ENCODE measurements at regions of chr16 and their contacts with region 1.

Region 1: DNA sequence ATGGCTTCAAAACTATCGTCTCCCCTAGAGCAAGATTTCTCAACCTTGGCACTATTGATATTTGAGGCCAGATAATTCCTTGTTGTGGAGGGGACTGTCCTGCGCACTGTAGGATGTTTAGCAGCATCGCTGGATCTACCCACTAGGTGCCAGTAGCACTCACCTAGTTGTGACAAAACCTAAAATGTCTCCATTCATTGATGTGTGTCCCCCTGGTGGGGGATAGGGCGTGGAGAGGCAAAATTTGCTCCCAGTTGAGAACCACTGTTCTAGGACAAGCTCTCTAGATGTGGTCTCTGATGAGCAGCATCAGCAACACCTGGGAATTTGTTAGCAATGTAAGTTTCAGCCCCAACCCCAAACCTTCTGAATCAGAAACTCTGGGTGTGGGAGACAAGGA is 259.0 kb downstream of the XYLT1 start:
- DNase-seq: peak; percentile 68 to 77 (median 75)
- H3K4me3 ChIP-seq: no peak overlapping the region
- H3K27ac ChIP-seq: no peak overlapping the region
- H3K4me1 ChIP-seq: peaks cover 0 to 6% (median 1%) of the 10 kb centered on the region in 4 experiments
- H3K27me3 ChIP-seq: no peaks in the 10 kb centered on the region

Region 2: DNA sequence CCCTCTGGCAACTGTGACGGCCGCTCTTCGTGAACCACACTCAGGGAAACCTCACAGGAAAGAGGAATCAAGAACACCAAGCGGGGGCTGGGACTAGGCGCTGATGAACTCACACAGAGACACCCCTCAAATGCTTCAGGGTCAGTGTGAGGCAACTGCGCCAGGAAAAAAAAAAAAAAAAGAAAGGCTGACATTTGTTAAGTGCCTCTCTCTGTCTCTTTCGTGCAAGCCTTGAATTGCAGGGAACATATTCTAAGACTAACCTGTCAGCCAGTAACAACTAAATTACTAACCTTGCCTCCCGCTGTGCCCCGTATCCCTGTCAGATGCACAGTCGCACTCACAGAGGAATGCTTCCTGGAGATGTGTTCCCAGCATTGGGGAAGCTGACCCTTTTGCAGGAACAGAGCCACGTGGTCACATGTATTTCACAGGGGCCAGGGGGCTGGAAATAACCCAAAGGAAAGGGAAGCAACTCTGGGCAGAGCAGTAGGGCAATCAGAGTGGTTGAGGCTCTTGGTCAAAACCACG is 11.1 kb after region 1 on chr16:
- CTCF ChIA-PET with region 1: interaction called, 14 read pairs
- POLR2A ChIA-PET with region 1: no interaction called
- DNase-seq: peak; percentile 54 to 80 (median 77)
- H3K4me3 ChIP-seq: peak overlapping the region in 2 of 7 experiments; percentile 7 to 17
- H3K27ac ChIP-seq: no peak overlapping the region
- H3K4me1 ChIP-seq: peaks cover 6 to 59% (median 44%) of the 10 kb centered on the region in 4 experiments
- H3K27me3 ChIP-seq: no peaks in the 10 kb centered on the region

Measured in common myeloid progenitor, CD34-positive (primary cell).